Common myeloid progenitor, CD34-positive (primary cell): ENCODE measurements at regions of chr16 and their contacts with region 1.

Region 1: GRCh38 chr16:57873218-57873617 is 70.9 kb upstream of the KIFC3 start:
- DNase-seq: no peak
- H3K4me3 ChIP-seq: no peak overlapping the region
- H3K27ac ChIP-seq: no peak overlapping the region
- H3K4me1 ChIP-seq: no peaks in the 10 kb centered on the region
- H3K27me3 ChIP-seq: peaks cover 0 to 8% (median 0%) of the 10 kb centered on the region in 5 experiments

Region 2: GRCh38 chr16:57844416-57845030 is 28.7 kb before region 1 on chr16:
- CTCF ChIA-PET with region 1: no interaction called
- POLR2A ChIA-PET with region 1: interaction called, 11 read pairs
- DNase-seq: no peak
- H3K4me3 ChIP-seq: no peak overlapping the region
- H3K27ac ChIP-seq: no peak overlapping the region
- H3K4me1 ChIP-seq: peaks cover 0 to 5% (median 0%) of the 10 kb centered on the region in 4 experiments
- H3K27me3 ChIP-seq: peaks cover 0 to 2% (median 0%) of the 10 kb centered on the region in 5 experiments